ENCODE measurements at regions of chr11 and their contacts with region 1.

Region 1: GRCh38 chr11:47176328-47177228 is at the start of gene ARFGAP2:
- DNase-seq: peak; percentile 99
- H3K4me3 Mint-ChIP-seq: peak within 1 kb of the TSS; percentile 98
- H3K27ac Mint-ChIP-seq: peak within 1 kb of the TSS; percentile 99
- H3K4me1 Mint-ChIP-seq: peaks cover 23% of the 10 kb centered on the region
- H3K27me3 Mint-ChIP-seq: no peaks in the 10 kb centered on the region
- CTCF ChIP-seq: no peak
- total RNA-seq, gene ARFGAP2: 108 and 121 TPM in 2 replicates

Region 2: GRCh38 chr11:47213985-47214564 is 37.5 kb after region 1 on chr11:
- CTCF ChIA-PET with region 1: interaction called, 5 read pairs
- intact Hi-C with region 1: loop called (anchors 5 kb)
- DNase-seq: peak; percentile 89
- H3K4me3 Mint-ChIP-seq: peak overlapping the region; percentile 71
- H3K27ac Mint-ChIP-seq: peak overlapping the region; percentile 80
- H3K4me1 Mint-ChIP-seq: peaks cover 34% of the 10 kb centered on the region
- H3K27me3 Mint-ChIP-seq: no peaks in the 10 kb centered on the region
- CTCF ChIP-seq: no peak

Region 3: DNA sequence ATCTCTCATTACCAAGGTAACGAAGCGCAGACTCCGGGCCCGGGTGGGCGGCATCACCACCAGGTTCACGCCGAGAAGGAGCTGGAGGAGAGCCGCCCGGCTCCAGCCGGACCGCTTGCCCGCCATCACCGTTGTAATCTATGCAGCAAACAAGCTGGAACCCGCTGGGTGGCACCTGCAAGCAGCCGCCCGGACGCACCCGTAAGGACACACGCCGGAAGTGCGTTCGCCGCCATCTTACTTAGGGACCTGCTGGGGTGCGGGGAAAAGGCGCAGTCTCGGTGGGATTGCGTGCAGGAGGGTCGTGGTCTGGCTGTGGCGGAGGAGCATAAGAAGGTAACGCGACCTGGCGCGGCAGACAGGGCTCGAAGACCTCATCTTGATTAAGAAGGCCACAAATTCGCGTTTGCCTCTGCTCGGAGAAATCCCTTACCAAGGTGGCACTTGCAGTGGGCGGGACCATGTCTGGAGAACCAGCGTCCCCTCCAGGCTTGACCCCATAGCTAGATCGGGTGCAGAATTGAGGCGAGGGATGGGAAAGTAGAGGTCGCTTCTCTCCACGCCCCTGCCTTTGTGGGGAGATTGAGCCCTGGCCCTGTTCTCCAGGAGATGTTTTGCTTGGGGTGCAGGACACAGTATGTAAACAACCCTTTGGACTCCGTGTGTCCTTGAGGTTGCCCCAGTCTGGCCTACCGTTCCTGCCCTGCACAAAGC is 72.2 kb after region 1 on chr11 and contains the start of gene ACP2:
- CTCF ChIA-PET with region 1: interaction called, 10 read pairs
- intact Hi-C with region 1: no loop called
- DNase-seq: peak; percentile 88
- H3K4me3 Mint-ChIP-seq: peak within 1 kb of the TSS; percentile 98
- H3K27ac Mint-ChIP-seq: peak within 1 kb of the TSS; percentile 98
- H3K4me1 Mint-ChIP-seq: no peaks in the 10 kb centered on the region
- H3K27me3 Mint-ChIP-seq: no peaks in the 10 kb centered on the region
- CTCF ChIP-seq: no peak
- total RNA-seq, gene ACP2: 23.5 and 30.6 TPM in 2 replicates

Region 4: GRCh38 chr11:47355283-47356128 is 178.9 kb after region 1 on chr11:
- CTCF ChIA-PET with region 1: no interaction called
- intact Hi-C with region 1: loop called (anchors 5 kb)
- DNase-seq: peak; percentile 96
- H3K4me3 Mint-ChIP-seq: no peak overlapping the region
- H3K27ac Mint-ChIP-seq: no peak overlapping the region
- H3K4me1 Mint-ChIP-seq: no peaks in the 10 kb centered on the region
- H3K27me3 Mint-ChIP-seq: no peaks in the 10 kb centered on the region
- CTCF ChIP-seq: peak; percentile 97

Measured in Calu3 (cell line).